Endothelial cell of umbilical vein (primary cell): ENCODE measurements at regions of chr9 and their contacts with region 1.

Region 1: GRCh38 chr9:13898957-13899356 is 415.0 kb downstream of the NFIB start:
- DNase-seq: peak; percentile 83
- H3K4me3 ChIP-seq: no peak overlapping the region
- H3K27ac ChIP-seq: no peak overlapping the region
- H3K4me1 ChIP-seq: peaks cover 31% of the 10 kb centered on the region
- H3K27me3 ChIP-seq: no peaks in the 10 kb centered on the region
- CTCF ChIP-seq: no peak
- POLR2A ChIP-seq: no peak

Region 2: DNA sequence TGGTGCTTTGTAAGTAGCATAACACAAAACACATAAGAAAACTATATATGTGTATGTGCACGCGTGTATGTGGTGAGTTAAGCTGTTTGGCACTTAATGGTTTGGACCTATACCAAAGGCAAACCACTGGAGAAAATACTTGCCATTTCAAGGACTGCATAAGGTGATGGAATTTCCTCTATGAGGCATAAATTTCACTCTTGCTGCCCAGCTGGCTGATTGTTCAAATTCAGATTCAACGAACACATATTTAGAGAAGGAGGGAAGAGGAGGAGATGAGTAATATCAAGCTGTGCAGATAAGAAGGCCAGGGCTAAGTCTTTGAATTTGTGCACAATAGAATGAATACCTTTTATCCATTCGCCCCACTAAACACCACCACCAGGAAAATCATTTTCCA is 148.9 kb before region 1 on chr9:
- CTCF ChIA-PET with region 1: no interaction called
- POLR2A ChIA-PET with region 1: no interaction called
- dilution Hi-C with region 1: no loop called
- intact Hi-C with region 1: loop called (anchors 5 kb)
- DNase-seq: peak; percentile 96
- H3K4me3 ChIP-seq: no peak overlapping the region
- H3K27ac ChIP-seq: peak overlapping the region; percentile 72
- H3K4me1 ChIP-seq: peaks cover 17% of the 10 kb centered on the region
- H3K27me3 ChIP-seq: no peaks in the 10 kb centered on the region
- CTCF ChIP-seq: no peak
- POLR2A ChIP-seq: peak; percentile 49

Region 3: DNA sequence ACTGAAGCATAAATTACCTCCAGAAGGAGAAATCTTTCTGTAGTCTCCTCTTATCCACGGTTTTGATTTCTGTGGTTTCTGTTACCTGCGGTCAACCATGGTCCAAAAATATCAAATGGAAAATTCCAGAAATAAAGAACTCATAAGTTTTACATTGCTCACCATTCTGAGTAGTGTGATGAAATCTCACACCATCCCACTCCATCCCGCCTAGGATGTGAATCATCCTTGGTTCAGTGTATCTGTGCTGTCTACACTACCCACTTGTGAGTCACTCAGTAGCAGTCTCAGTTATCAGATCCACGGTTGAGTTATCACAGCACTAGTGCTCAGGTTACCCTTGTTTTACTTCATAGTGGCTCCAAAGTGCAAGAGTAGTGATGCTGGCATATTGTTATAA is 43.7 kb after region 1 on chr9:
- CTCF ChIA-PET with region 1: interaction called, 3 read pairs
- POLR2A ChIA-PET with region 1: no interaction called
- dilution Hi-C with region 1: no loop called
- intact Hi-C with region 1: loop called (anchors 5 kb)
- DNase-seq: peak; percentile 81
- H3K4me3 ChIP-seq: no peak overlapping the region
- H3K27ac ChIP-seq: peak overlapping the region; percentile 44
- H3K4me1 ChIP-seq: peaks cover 33% of the 10 kb centered on the region
- H3K27me3 ChIP-seq: no peaks in the 10 kb centered on the region
- CTCF ChIP-seq: no peak
- POLR2A ChIP-seq: no peak